ENCODE measurements at regions of chr2 and their contacts with region 1.

Region 1: GRCh38 chr2:28594289-28595108 is 98.6 kb downstream of the PLB1 start:
- DNase-seq: peak; percentile 91
- H3K4me3 Mint-ChIP-seq: peak overlapping the region; percentile 23
- H3K27ac Mint-ChIP-seq: peak overlapping the region; percentile 55
- H3K4me1 Mint-ChIP-seq: peaks cover 15% of the 10 kb centered on the region
- H3K27me3 Mint-ChIP-seq: no peaks in the 10 kb centered on the region

Region 2: GRCh38 chr2:28583899-28584553 is 10.5 kb before region 1 on chr2:
- CTCF ChIA-PET with region 1: interaction called, 41 read pairs
- POLR2A ChIA-PET with region 1: interaction called, 5 read pairs
- intact Hi-C with region 1: no loop called
- DNase-seq: peak; percentile 86
- H3K4me3 Mint-ChIP-seq: peak overlapping the region; percentile 46
- H3K27ac Mint-ChIP-seq: peak overlapping the region; percentile 78
- H3K4me1 Mint-ChIP-seq: peaks cover 46% of the 10 kb centered on the region
- H3K27me3 Mint-ChIP-seq: no peaks in the 10 kb centered on the region

Region 3: GRCh38 chr2:28628987-28629386 is 34.5 kb after region 1 on chr2:
- CTCF ChIA-PET with region 1: interaction called, 44 read pairs
- POLR2A ChIA-PET with region 1: interaction called, 5 read pairs
- intact Hi-C with region 1: loop called (anchors 1 kb)
- DNase-seq: no peak
- H3K4me3 Mint-ChIP-seq: no peak overlapping the region
- H3K27ac Mint-ChIP-seq: no peak overlapping the region
- H3K4me1 Mint-ChIP-seq: peaks cover 40% of the 10 kb centered on the region
- H3K27me3 Mint-ChIP-seq: no peaks in the 10 kb centered on the region

Region 4: DNA sequence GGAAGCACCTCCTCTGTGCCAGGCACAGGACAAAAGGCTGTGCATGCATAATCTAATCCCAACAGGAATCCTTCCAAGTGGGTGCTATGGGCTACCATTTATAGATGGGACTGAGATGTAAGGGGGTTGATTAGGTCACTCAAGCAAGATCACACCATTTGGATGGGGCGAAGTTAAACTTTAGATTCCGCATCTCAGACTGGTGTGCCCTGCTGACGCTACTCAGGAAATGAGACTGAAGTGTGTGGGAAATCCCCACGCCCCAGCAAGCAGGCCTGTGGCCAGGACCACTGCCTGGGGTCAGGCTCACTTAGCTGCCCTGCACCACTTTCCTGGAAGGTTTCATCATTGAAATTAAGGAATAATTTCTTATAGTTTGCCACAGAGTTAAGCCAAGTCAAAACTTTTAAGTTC is 86.7 kb after region 1 on chr2:
- CTCF ChIA-PET with region 1: interaction called, 20 read pairs
- POLR2A ChIA-PET with region 1: no interaction called
- intact Hi-C with region 1: loop called (anchors 1 kb)
- DNase-seq: peak; percentile 85
- H3K4me3 Mint-ChIP-seq: no peak overlapping the region
- H3K27ac Mint-ChIP-seq: peak overlapping the region; percentile 89
- H3K4me1 Mint-ChIP-seq: peaks cover 43% of the 10 kb centered on the region
- H3K27me3 Mint-ChIP-seq: no peaks in the 10 kb centered on the region

Region 5: DNA sequence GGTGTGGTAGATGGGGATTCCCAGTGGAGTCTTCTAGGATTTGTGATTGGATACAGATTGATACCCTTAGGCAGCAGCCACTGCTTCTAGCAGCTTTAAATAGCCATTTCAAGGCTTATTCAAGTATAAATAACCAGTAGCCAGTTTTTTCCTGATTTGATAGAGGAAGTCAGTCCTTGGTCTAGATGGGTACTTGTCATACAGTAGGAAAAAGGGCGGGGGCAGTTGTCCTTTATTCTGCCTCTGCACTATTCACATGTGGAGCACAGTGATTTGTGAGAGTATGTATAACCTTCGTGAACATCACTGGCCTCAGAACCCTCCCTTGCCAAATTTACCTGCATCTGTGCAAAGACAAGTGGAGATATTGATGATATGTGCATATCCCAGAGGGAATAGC is 164.0 kb after region 1 on chr2:
- CTCF ChIA-PET with region 1: interaction called, 126 read pairs
- POLR2A ChIA-PET with region 1: interaction called, 3 read pairs
- intact Hi-C with region 1: loop called (anchors 1 kb)
- DNase-seq: no peak
- H3K4me3 Mint-ChIP-seq: no peak overlapping the region
- H3K27ac Mint-ChIP-seq: peak overlapping the region; percentile 16
- H3K4me1 Mint-ChIP-seq: peaks cover 71% of the 10 kb centered on the region
- H3K27me3 Mint-ChIP-seq: no peaks in the 10 kb centered on the region

Region 6: DNA sequence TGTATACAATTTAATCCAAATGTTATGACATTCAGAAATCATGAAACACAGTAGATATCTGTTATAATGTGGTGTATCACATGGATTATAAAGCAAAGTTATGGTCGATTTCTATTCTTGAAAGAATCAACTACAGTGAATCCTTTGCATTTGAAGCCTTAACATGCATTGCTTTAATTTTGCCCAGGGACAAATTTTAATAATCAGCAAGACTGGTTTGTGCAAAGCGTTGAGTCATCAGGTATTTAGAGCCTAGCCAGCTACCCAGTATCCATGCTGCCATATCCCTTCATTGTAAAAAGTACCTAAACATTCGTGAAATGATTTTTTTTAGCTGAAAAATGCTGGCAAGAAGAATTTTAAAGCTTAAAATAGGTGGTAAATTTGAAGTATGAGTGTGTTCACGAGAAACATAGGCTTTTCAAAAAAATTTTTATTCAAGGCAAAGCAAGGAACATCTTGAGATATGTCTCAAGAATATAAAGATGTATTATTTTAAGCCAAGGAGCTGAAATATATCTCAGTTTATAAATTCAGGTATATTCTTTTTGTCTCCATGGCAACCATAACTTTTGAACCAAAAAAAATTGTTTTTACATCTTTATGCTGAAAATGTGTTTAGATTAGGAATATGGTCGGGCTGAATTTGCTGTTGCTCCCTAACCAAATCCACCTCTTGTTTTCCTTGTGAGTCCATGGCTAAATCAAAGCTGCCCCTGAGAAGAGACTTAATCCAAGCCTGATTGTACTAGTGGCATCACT is 207.4 kb after region 1 on chr2:
- CTCF ChIA-PET with region 1: interaction called, 21 read pairs
- POLR2A ChIA-PET with region 1: no interaction called
- intact Hi-C with region 1: no loop called
- DNase-seq: no peak
- H3K4me3 Mint-ChIP-seq: no peak overlapping the region
- H3K27ac Mint-ChIP-seq: no peak overlapping the region
- H3K4me1 Mint-ChIP-seq: peaks cover 8% of the 10 kb centered on the region
- H3K27me3 Mint-ChIP-seq: no peaks in the 10 kb centered on the region

Region 7: DNA sequence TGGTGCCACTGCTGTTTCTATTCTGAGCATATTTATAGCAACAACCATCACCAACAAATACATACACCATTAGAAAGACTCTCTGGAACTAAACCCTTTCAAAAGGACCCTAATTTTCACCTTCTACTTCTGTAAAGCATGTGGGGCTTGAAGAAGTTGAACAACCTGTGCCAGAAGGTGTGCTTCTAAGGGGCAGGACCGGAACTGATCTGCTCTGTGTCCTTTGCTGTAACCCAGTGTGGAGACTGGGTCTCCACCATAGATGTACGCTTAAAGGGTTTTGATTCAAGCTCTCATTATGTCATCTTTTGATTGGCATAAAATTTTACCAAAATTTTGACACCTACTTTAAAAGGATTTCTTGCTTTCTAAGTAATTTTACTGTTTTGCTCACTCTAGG is 340.3 kb after region 1 on chr2:
- CTCF ChIA-PET with region 1: no interaction called
- POLR2A ChIA-PET with region 1: no interaction called
- intact Hi-C with region 1: no loop called
- DNase-seq: no peak
- H3K4me3 Mint-ChIP-seq: no peak overlapping the region
- H3K27ac Mint-ChIP-seq: no peak overlapping the region
- H3K4me1 Mint-ChIP-seq: no peaks in the 10 kb centered on the region
- H3K27me3 Mint-ChIP-seq: no peaks in the 10 kb centered on the region

Region 8: DNA sequence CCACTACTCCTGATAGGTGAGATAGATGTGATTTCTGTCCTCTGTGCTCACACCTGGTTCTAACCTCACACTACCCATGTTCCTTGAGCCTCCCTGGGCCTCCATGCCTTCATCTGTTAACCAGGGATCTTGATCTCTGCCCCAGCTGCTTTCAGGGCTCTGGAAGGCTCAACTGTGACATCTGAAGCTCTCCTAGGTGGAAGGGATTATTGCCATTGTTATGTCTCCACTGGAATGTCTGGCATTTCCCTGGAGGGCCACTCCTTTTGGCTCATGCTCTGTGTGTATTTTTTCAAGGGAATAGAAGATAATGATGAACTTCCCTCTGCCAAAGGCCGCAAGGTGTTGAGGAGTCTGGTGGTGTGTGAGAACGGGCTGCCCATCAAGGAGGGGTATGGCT is 438.7 kb after region 1 on chr2:
- CTCF ChIA-PET with region 1: no interaction called
- POLR2A ChIA-PET with region 1: no interaction called
- intact Hi-C with region 1: no loop called
- DNase-seq: no peak
- H3K4me3 Mint-ChIP-seq: no peak overlapping the region
- H3K27ac Mint-ChIP-seq: no peak overlapping the region
- H3K4me1 Mint-ChIP-seq: peaks cover 7% of the 10 kb centered on the region
- H3K27me3 Mint-ChIP-seq: no peaks in the 10 kb centered on the region